K562 (cell line): ENCODE measurements at regions of chr1 and their contacts with region 1.

Region 1: DNA sequence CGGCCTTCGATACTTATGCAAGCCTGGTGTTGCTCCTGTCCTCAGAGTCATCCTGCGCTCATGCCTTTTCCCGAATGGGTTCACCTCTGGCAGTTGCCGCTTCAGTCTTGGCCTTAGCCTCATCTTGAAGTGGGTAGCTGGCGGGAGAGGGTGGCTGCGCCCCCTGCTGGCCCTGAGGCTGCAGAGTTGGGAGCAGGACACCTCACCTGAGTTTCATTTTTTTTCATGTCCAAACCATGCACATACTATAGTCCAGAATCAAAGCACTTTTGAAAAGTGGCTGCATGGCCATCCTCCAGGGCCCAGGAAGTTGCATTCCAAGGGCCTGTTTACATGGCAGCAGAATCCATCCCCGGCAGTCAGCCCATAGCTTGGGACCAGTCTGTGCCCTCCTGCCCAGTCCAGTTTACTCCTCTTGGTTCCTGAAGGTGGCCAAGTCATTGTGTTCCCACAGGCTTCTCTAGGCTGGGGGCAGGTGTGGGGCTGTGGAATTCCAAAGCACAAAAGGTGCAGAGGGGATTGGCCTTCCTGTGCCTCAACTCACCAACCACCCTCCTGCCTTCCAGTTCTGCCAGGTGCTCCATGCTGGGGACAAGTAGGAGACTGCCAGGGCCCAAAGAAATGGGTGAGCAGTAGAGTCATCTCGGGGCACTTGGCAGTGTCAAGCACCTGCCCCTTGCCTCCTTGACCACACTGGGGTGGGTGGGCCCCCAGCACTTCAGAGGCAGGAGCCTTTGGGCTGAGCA is 44.0 kb downstream of the YARS1 start:
- DNase-seq: peak; percentile 81 to 90 (median 86)
- ATAC-seq: peak; percentile 86
- H3K4me3 ChIP-seq: no peak overlapping the region
- H3K27ac ChIP-seq: no peak overlapping the region
- H3K4me1 ChIP-seq: peaks cover 6 to 36% of the 10 kb centered on the region in 2 experiments; a peak in 3 of 5 replicates
- H3K27me3 ChIP-seq: no peaks in the 10 kb centered on the region
- CTCF ChIP-seq: peak; percentile 98 to 99 (median 98)
- EP300 ChIP-seq: peak; percentile 43; the same call in 1 of the 2 replicates
- POLR2A ChIP-seq: no peak
- RAD21 ChIP-seq: peak; percentile 96 to 99

Region 2: DNA sequence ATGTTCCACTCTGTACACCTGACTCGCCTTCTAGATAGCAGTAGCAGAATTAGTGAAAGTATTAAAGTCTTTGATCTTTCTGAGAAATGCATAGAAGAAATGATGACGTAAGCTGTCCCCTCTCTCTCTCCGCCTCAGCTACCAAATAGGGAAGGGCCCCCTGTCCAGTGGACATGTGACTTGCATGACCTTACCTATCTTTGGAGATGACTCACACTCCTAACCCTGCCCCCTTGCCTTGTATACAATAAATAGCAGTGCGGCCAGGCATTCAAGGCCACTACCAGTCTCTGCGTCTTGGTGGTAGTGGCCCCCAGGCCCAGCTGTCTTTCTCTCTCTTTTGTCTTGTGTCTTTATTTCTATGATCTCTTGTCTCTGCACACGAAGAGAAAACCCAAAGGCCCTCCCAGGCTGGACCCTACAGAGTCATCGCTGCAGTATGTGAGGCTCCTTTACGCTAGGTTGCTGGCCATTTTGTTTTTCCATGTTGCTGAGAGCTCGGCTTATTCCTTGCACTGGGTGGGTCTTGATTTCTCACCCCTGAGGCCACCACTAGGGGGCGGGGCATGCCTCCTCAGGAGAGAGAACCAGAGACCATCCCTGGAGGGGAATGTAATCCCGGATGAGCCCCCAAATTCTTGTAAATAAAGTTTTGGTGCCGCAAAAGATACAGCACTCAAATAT is 324.3 kb before region 1 on chr1:
- CTCF ChIA-PET with region 1: no interaction called
- POLR2A ChIA-PET with region 1: interaction called, 3 read pairs
- in situ Hi-C with region 1: no loop called
- intact Hi-C with region 1: loop called (anchors 2 kb)
- DNase-seq: peak; percentile 61 to 87 (median 72)
- ATAC-seq: peak; percentile 96
- H3K4me3 ChIP-seq: no peak overlapping the region
- H3K27ac ChIP-seq: peak overlapping the region; percentile 18; the same call in 2 of the 3 replicates
- H3K4me1 ChIP-seq: peaks cover 0 to 4% of the 10 kb centered on the region in 2 experiments; a peak in 3 of 5 replicates
- H3K27me3 ChIP-seq: peaks cover 20 to 21% of the 10 kb centered on the region in 2 experiments; a peak in 4 of 5 replicates
- CTCF ChIP-seq: peak; percentile 85 to 87 (median 87)
- EP300 ChIP-seq: no peak
- POLR2A ChIP-seq: no peak
- RAD21 ChIP-seq: peak; percentile 49 to 69

Region 3: GRCh38 chr1:32695098-32695904 is 77.9 kb before region 1 on chr1:
- CTCF ChIA-PET with region 1: no interaction called
- POLR2A ChIA-PET with region 1: interaction called, 21 read pairs
- in situ Hi-C with region 1: no loop called
- intact Hi-C with region 1: no loop called
- DNase-seq: peak; percentile 39 to 89 (median 54)
- ATAC-seq: peak; percentile 79
- H3K4me3 ChIP-seq: peak overlapping the region; percentile 1; the same call in 1 of the 2 replicates
- H3K27ac ChIP-seq: peak overlapping the region; percentile 48; the same call in 2 of the 3 replicates
- H3K4me1 ChIP-seq: peaks cover 14 to 19% of the 10 kb centered on the region in 2 experiments
- H3K27me3 ChIP-seq: no peaks in the 10 kb centered on the region
- CTCF ChIP-seq: no peak
- EP300 ChIP-seq: no peak
- POLR2A ChIP-seq: no peak
- RAD21 ChIP-seq: no peak

Region 4: DNA sequence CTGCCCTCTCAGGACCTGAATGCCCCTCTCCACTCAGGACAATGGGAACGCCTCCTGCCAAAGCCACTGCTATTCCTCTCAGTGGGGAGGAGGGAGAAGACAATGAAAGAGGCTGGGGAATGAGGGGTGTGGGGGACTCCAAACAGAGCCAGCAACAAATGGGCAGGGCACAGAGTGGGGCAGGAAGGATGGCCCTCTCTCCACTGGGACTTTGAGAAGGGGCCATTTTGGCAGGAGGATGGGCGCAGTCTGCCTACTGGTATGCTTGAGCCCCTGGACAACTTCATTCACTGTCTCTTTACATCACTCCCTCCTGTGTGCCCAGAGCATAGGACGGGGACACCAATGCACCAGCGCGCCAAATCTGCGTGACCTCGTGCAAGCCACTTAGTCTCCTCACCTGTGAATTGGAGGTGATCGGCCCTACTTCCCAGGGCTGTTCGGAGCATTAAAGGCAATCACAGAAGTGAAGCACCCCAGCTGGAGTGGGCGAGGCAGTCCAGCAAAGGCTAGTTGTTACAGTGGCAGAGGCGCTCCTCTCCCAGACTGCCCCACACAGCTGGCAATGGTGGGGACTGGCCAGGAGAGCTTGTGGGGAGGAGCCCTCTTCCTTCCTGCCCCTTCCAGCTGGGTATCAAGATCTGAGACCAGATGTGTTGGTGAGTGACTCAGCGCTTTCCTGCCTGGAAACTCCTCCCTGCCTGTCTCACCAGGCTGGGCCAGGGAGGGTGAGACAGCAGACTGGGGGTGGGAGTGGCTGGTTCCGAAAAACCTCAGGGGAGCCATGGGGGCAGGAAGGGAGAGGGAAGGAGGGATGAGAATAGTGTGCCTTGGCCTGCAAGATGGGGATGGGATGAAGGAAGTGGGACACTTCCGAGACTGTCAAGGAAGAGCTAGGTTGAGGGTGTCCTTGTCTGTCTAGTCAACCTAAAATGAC is 48.2 kb before region 1 on chr1:
- CTCF ChIA-PET with region 1: no interaction called
- POLR2A ChIA-PET with region 1: interaction called, 33 read pairs
- in situ Hi-C with region 1: no loop called
- intact Hi-C with region 1: no loop called
- DNase-seq: peak; percentile 95 to 98 (median 96)
- ATAC-seq: peak; percentile 95
- H3K4me3 ChIP-seq: no peak overlapping the region
- H3K27ac ChIP-seq: peak overlapping the region; percentile 77
- H3K4me1 ChIP-seq: peaks cover 29 to 41% of the 10 kb centered on the region in 2 experiments
- H3K27me3 ChIP-seq: no peaks in the 10 kb centered on the region
- CTCF ChIP-seq: 0 out of 6 replicates have a peak, but pooled peaks of 2 of the 3 experiments have one; percentile 1 to 7
- EP300 ChIP-seq: peak; percentile 90
- POLR2A ChIP-seq: peak; percentile 68
- RAD21 ChIP-seq: peak in 1 of 2 experiments; percentile 6; a peak in 1 of 4 replicates

Region 5: GRCh38 chr1:32761253-32761880 is 11.8 kb before region 1 on chr1:
- CTCF ChIA-PET with region 1: no interaction called
- POLR2A ChIA-PET with region 1: interaction called, 65 read pairs
- in situ Hi-C with region 1: no loop called
- intact Hi-C with region 1: no loop called
- DNase-seq: peak; percentile 69 to 84 (median 80)
- ATAC-seq: peak; percentile 28
- H3K4me3 ChIP-seq: no peak overlapping the region
- H3K27ac ChIP-seq: peak overlapping the region; percentile 33
- H3K4me1 ChIP-seq: peaks cover 62 to 66% of the 10 kb centered on the region in 2 experiments
- H3K27me3 ChIP-seq: no peaks in the 10 kb centered on the region
- CTCF ChIP-seq: no peak
- EP300 ChIP-seq: no peak
- POLR2A ChIP-seq: no peak
- RAD21 ChIP-seq: no peak

Region 6: GRCh38 chr1:32870615-32871363 is 97.6 kb after region 1 on chr1 and contains the start of gene FNDC5:
- CTCF ChIA-PET with region 1: no interaction called
- POLR2A ChIA-PET with region 1: interaction called, 3 read pairs
- in situ Hi-C with region 1: no loop called
- intact Hi-C with region 1: loop called (anchors 5 kb)
- DNase-seq: peak; percentile 37 to 86 (median 72)
- ATAC-seq: peak; percentile 80
- H3K4me3 ChIP-seq: peak within 1 kb of the TSS; percentile 28
- H3K27ac ChIP-seq: no peak within 1 kb of the TSS
- H3K4me1 ChIP-seq: peaks cover 5 to 16% of the 10 kb centered on the region in 2 experiments; a peak in 4 of 5 replicates
- H3K27me3 ChIP-seq: peaks cover 4 to 20% of the 10 kb centered on the region in 2 experiments; a peak in 3 of 5 replicates
- CTCF ChIP-seq: no peak
- EP300 ChIP-seq: no peak
- POLR2A ChIP-seq: no peak
- RAD21 ChIP-seq: no peak
- polyA plus RNA-seq, gene FNDC5: 0.06 to 0.10 TPM

Region 7: GRCh38 chr1:33001282-33001681 is 228.1 kb after region 1 on chr1:
- CTCF ChIA-PET with region 1: no interaction called
- POLR2A ChIA-PET with region 1: no interaction called
- in situ Hi-C with region 1: no loop called
- intact Hi-C with region 1: no loop called
- DNase-seq: peak in 2 of 4 experiments; percentile 52 to 53
- ATAC-seq: peak; percentile 49
- H3K4me3 ChIP-seq: no peak overlapping the region
- H3K27ac ChIP-seq: no peak overlapping the region
- H3K4me1 ChIP-seq: peaks cover 4 to 28% of the 10 kb centered on the region in 2 experiments
- H3K27me3 ChIP-seq: no peaks in the 10 kb centered on the region
- CTCF ChIP-seq: peak; percentile 21 to 49 (median 34); a peak in 5 of 6 replicates
- EP300 ChIP-seq: no peak
- POLR2A ChIP-seq: no peak
- RAD21 ChIP-seq: no peak